Sciatic nerve (tissue), 2 donors: ENCODE measurements at regions of chr12 and their contacts with region 1.

Region 1: DNA sequence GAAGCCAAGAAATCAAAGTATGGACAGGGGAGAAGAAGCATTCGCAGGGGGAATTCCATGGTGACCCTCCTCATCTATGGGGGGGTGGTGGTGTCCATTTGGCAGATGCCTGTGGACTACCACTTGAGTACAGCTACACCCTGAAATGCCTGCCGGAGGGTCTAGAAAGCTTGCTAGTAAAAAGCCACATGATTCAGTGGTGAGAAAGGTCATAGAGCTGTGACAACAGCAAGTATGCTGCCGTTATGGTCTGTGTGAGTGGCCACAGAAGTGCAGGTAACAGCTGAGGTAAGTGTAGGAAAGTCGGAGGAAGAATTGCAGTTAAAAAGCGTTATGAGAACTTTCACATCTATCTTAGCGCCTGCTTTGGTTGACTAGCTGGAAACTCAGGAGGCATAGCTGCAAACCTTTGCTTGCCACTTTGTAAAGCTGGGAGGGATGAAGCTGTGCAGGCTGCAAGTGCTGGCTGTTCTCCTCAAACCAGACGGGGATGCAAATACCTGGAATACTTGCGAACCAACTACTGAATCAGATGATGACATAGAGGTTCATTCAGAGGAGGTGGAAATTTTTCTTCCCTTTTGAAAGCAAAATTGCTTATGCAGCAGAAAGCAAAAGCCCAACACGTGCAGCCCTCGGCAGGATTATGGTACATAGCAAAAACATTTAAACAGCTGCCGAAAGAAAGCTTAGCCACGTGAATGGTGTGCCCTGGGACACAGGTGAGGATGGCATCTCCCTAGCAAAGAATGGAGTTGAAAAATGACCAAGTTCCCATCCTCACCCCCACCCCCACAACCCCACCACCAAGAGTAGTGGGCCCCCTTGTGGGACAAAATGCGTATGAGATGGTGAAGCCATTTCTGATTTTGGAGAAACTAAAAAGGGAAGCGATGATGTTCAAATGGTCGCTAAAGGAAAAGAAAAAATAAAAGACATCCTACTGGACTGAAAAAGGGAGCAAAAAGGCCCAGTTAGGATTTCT is 287.0 kb downstream of the RERGL start:
- DNase-seq: no peak
- ATAC-seq: no peak

Region 2: GRCh38 chr12:17875230-17875629 is 72.3 kb after region 1 on chr12:
- intact Hi-C with region 1: no loop called
- DNase-seq: no peak
- ATAC-seq: no peak

Region 3: GRCh38 chr12:18320036-18320617 is 517.2 kb after region 1 on chr12:
- intact Hi-C with region 1: loop called (anchors 10 kb)
- DNase-seq: no peak
- ATAC-seq: no peak